CD14-positive monocyte (primary cell): ENCODE measurements at regions of chr10 and their contacts with region 1.

Region 1: GRCh38 chr10:49518982-49519578 is 19.8 kb downstream of the ERCC6 start:
- DNase-seq: peak; percentile 26 to 45 (median 42)
- H3K4me3 ChIP-seq: no peak overlapping the region
- H3K4me3 Mint-ChIP-seq: no peak overlapping the region
- H3K27ac ChIP-seq: no peak overlapping the region
- H3K27ac Mint-ChIP-seq: peak overlapping the region in 1 of 7 donors; percentile 67
- H3K4me1 ChIP-seq: no peaks in the 10 kb centered on the region
- H3K4me1 Mint-ChIP-seq: peaks cover 9% of the 10 kb centered on the region
- H3K27me3 ChIP-seq: no peaks in the 10 kb centered on the region
- H3K27me3 Mint-ChIP-seq: peaks cover 0 to 2% (median 0%) of the 10 kb centered on the region in 3 donors
- CTCF ChIP-seq: peak; percentile 76

Region 2: DNA sequence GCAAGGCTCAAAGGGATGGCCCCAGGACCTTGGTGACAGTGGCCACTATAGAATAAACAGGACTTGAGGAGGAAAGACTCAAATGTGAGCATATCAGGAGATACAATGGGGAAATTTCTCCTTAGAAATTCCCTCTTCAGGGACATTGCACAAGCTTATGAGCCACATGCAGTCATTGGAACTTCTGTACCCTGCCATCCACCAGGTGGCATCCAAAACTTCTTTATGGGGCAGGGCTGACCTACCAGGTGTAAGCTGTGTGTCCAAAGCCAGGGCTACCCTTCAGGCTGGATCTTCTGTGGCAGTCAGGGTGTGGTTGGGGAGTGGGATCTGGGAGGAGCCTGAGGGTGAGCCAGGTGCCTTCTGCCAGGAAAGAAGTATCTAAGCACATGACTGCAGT is 542.9 kb before region 1 on chr10:
- intact Hi-C with region 1: loop called (anchors 5 kb)
- DNase-seq: no peak
- H3K4me3 ChIP-seq: no peak overlapping the region
- H3K4me3 Mint-ChIP-seq: no peak overlapping the region
- H3K27ac ChIP-seq: no peak overlapping the region
- H3K27ac Mint-ChIP-seq: no peak overlapping the region
- H3K4me1 ChIP-seq: no peaks in the 10 kb centered on the region
- H3K4me1 Mint-ChIP-seq: no peaks in the 10 kb centered on the region
- H3K27me3 ChIP-seq: no peaks in the 10 kb centered on the region
- H3K27me3 Mint-ChIP-seq: no peaks in the 10 kb centered on the region
- CTCF ChIP-seq: no peak

Region 3: GRCh38 chr10:49369216-49370162 is 149.6 kb before region 1 on chr10:
- intact Hi-C with region 1: no loop called
- DNase-seq: peak in 2 of 3 donors; percentile 13 to 54
- H3K4me3 ChIP-seq: no peak overlapping the region
- H3K4me3 Mint-ChIP-seq: no peak overlapping the region
- H3K27ac ChIP-seq: no peak overlapping the region
- H3K27ac Mint-ChIP-seq: no peak overlapping the region
- H3K4me1 ChIP-seq: peaks cover 3 to 7% of the 10 kb centered on the region in 2 donors
- H3K4me1 Mint-ChIP-seq: peaks cover 7% of the 10 kb centered on the region
- H3K27me3 ChIP-seq: no peaks in the 10 kb centered on the region
- H3K27me3 Mint-ChIP-seq: peaks cover 2 to 15% (median 8%) of the 10 kb centered on the region in 3 donors
- CTCF ChIP-seq: no peak

Region 4: GRCh38 chr10:49620841-49621378 is 101.8 kb after region 1 on chr10:
- intact Hi-C with region 1: no loop called
- DNase-seq: no peak
- H3K4me3 ChIP-seq: no peak overlapping the region
- H3K4me3 Mint-ChIP-seq: no peak overlapping the region
- H3K27ac ChIP-seq: no peak overlapping the region
- H3K27ac Mint-ChIP-seq: no peak overlapping the region
- H3K4me1 ChIP-seq: no peaks in the 10 kb centered on the region
- H3K4me1 Mint-ChIP-seq: no peaks in the 10 kb centered on the region
- H3K27me3 ChIP-seq: peaks cover under 1 to 11% of the 10 kb centered on the region in 2 donors
- H3K27me3 Mint-ChIP-seq: peaks cover 22 to 34% (median 26%) of the 10 kb centered on the region in 3 donors
- CTCF ChIP-seq: no peak

Region 5: GRCh38 chr10:49661218-49661856 is 142.3 kb after region 1 on chr10:
- intact Hi-C with region 1: no loop called
- DNase-seq: no peak
- H3K4me3 ChIP-seq: no peak overlapping the region
- H3K4me3 Mint-ChIP-seq: no peak overlapping the region
- H3K27ac ChIP-seq: no peak overlapping the region
- H3K27ac Mint-ChIP-seq: no peak overlapping the region
- H3K4me1 ChIP-seq: no peaks in the 10 kb centered on the region
- H3K4me1 Mint-ChIP-seq: no peaks in the 10 kb centered on the region
- H3K27me3 ChIP-seq: no peaks in the 10 kb centered on the region
- H3K27me3 Mint-ChIP-seq: peaks cover 3 to 12% (median 11%) of the 10 kb centered on the region in 3 donors
- CTCF ChIP-seq: no peak

Region 6: DNA sequence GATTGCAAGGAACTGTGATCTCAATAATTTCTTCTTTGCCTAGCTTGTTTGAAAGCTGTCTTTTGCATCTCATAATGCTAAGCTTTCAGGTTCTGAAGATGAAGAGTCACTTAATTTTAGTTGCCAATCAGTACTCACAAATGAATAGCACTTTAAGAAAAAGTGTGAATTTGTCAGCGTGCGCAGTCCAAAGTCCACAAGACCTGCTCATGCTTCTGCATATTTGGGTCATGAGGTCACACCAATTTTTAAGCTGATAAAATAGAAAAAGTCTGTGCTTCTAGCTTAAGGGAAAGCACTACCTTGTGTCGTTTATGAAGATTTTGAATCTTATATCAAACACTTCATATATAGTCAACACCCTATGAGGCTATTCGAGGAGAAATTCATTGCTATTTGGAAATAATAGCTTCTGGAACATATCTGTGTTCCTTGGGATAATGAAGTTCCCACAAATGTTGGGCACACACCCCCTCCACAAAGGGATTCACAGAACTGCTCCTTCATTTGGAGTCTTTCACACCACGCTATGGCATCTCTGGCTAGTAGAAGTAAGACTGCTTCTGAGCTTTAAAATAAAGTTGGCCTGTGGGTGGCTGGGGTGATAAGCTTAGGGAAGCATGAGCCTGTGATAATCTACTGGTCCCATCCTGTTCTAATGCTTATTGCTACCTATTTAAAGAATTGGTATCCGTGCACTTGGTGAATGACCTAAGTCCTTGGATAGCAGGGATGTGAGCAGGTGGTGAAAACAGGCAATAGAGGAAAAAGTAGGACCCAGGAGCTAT is 1333.0 kb after region 1 on chr10:
- intact Hi-C with region 1: no loop called
- DNase-seq: no peak
- H3K4me3 ChIP-seq: no peak overlapping the region
- H3K4me3 Mint-ChIP-seq: no peak overlapping the region
- H3K27ac ChIP-seq: no peak overlapping the region
- H3K27ac Mint-ChIP-seq: no peak overlapping the region
- H3K4me1 ChIP-seq: no peaks in the 10 kb centered on the region
- H3K4me1 Mint-ChIP-seq: no peaks in the 10 kb centered on the region
- H3K27me3 ChIP-seq: no peaks in the 10 kb centered on the region
- H3K27me3 Mint-ChIP-seq: peaks cover 0 to 5% (median 0%) of the 10 kb centered on the region in 3 donors
- CTCF ChIP-seq: no peak